Mammary epithelial cell (primary cell): ENCODE measurements at regions of chr13 and their contacts with region 1.

Region 1: GRCh38 chr13:46975173-46975572 is 78.3 kb upstream of the HTR2A start:
- DNase-seq: no peak
- H3K4me3 ChIP-seq: no peak overlapping the region
- H3K27ac ChIP-seq: no peak overlapping the region
- H3K4me1 ChIP-seq: no peaks in the 10 kb centered on the region
- H3K27me3 ChIP-seq: no peaks in the 10 kb centered on the region
- CTCF ChIP-seq: no peak

Region 2: DNA sequence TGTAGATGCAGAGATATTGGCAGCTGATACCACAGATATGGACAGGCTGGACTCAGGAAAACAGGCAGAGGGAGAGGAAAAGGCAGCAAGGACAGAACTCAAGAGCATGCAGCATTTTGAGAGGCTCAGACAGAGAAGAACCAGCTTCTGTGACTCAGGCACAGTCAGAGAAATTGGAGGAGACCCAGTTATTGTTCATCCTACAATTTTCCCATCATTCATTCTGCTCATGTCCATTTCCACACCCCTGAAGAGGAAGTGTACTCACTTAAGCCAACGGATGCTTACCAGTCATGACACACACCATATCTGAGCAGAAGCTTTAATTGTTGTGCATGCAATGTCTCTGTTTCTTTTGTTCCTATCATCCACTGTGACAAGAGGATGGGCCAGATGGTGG is 281.4 kb after region 1 on chr13:
- CTCF ChIA-PET with region 1: interaction called, 6 read pairs
- dilution Hi-C with region 1: no loop called
- in situ Hi-C with region 1: no loop called
- intact Hi-C with region 1: loop called (anchors 1 kb)
- DNase-seq: peak; percentile 85
- H3K4me3 ChIP-seq: no peak overlapping the region
- H3K27ac ChIP-seq: no peak overlapping the region
- H3K4me1 ChIP-seq: peaks cover 13% of the 10 kb centered on the region
- H3K27me3 ChIP-seq: no peaks in the 10 kb centered on the region
- CTCF ChIP-seq: no peak

Region 3: DNA sequence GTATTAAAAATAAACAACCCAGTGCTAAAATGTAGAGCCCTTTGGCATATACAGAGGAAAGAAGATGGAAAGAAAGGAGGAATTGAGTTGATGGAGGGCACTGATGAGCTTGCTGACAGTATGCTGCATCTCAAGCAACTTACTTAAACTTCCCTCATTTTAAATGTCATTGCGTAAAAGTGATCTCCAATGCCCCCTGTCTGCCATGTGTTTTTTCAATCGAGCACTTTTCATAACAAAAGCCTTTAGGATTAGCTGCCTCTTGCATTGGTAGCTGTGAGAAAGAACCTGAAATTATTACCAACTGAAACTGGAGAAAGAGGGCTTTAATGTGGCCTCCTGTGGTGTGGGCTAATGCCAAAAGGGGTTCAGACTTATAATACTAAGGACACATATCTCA is 484.3 kb after region 1 on chr13:
- CTCF ChIA-PET with region 1: no interaction called
- dilution Hi-C with region 1: no loop called
- in situ Hi-C with region 1: no loop called
- intact Hi-C with region 1: loop called (anchors 2 kb)
- DNase-seq: no peak
- H3K4me3 ChIP-seq: no peak overlapping the region
- H3K27ac ChIP-seq: no peak overlapping the region
- H3K4me1 ChIP-seq: no peaks in the 10 kb centered on the region
- H3K27me3 ChIP-seq: no peaks in the 10 kb centered on the region
- CTCF ChIP-seq: peak in 1 of 2 donors; percentile 14